Heart right ventricle (tissue), 16 donors: ENCODE measurements at regions of chr5 and their contacts with region 1.

Region 1: GRCh38 chr5:172688349-172689217 is 47.5 kb downstream of the NEURL1B start:
- DNase-seq: peak in 1 of 2 donors; percentile 53
- ATAC-seq: peak; percentile 30 to 58 (median 46)
- H3K4me3 ChIP-seq: no peak overlapping the region
- H3K27ac ChIP-seq: peak overlapping the region; percentile 8 to 92 (median 59)
- H3K4me1 ChIP-seq: peaks cover 23 to 89% (median 74%) of the 10 kb centered on the region in 9 donors
- H3K27me3 ChIP-seq: no peaks in the 10 kb centered on the region
- CTCF ChIP-seq: no peak

Region 2: GRCh38 chr5:172559004-172559932 is 129.3 kb before region 1 on chr5:
- intact Hi-C with region 1: loop called in 1 of 10 experiments (anchors 10 kb)
- DNase-seq: peak; percentile 73 to 80
- ATAC-seq: peak; percentile 27 to 75 (median 58)
- H3K4me3 ChIP-seq: peak overlapping the region in 7 of 10 donors; percentile 2 to 43 (median 24)
- H3K27ac ChIP-seq: peak overlapping the region; percentile 13 to 88 (median 80)
- H3K4me1 ChIP-seq: peaks cover 22 to 52% (median 40%) of the 10 kb centered on the region in 9 donors
- H3K27me3 ChIP-seq: no peaks in the 10 kb centered on the region
- CTCF ChIP-seq: no peak

Region 3: GRCh38 chr5:172616730-172617129 is 71.9 kb before region 1 on chr5:
- intact Hi-C with region 1: no loop called
- DNase-seq: peak; percentile 82
- ATAC-seq: peak; percentile 91 to 97 (median 94)
- H3K4me3 ChIP-seq: peak overlapping the region in 1 of 10 donors; percentile 5
- H3K27ac ChIP-seq: peak overlapping the region; percentile 56 to 87 (median 80)
- H3K4me1 ChIP-seq: peaks cover 0 to 18% (median 0%) of the 10 kb centered on the region in 9 donors
- H3K27me3 ChIP-seq: no peaks in the 10 kb centered on the region
- CTCF ChIP-seq: no peak

Region 4: DNA sequence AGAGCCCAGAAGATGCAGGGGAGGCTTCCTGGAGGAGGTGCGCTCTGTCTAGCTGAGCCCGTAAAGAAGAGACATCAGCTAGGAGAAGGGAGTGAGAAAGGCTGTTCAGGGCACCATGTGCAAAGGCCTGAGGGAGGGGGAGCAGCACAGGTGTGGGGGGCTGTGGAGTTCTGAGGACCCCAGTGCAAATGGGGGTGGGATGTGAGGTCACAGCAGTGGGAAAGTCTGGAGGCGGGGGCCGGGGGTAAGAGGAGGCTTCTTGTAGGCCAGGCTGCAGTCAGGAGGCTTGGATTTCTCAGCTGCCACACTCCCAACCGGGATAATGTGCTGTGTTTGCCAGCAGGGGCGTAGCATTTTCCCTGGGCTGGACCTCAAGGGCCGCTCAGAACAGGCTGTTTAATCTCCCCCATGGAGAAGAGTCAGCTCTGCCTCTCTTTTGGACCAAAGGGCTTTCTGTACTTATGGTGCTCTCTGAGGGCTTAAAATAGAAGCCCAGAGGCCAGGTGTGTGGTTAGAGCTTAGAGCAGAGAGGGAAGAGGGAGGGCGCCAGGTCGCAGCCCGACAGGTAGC is 41.8 kb before region 1 on chr5:
- intact Hi-C with region 1: loop called in 6 of 10 experiments (anchors 2 to 10 kb)
- DNase-seq: peak in 1 of 2 donors; percentile 66
- ATAC-seq: peak; percentile 36 to 67 (median 60)
- H3K4me3 ChIP-seq: peak overlapping the region in 9 of 10 donors; percentile 16 to 99 (median 85)
- H3K27ac ChIP-seq: peak overlapping the region; percentile 23 to 99 (median 96)
- H3K4me1 ChIP-seq: peaks cover 9 to 98% (median 79%) of the 10 kb centered on the region in 9 donors
- H3K27me3 ChIP-seq: peaks cover 0 to 18% (median 0%) of the 10 kb centered on the region in 7 donors
- CTCF ChIP-seq: peak; percentile 21 to 59 (median 48)

Region 5: GRCh38 chr5:173391031-173391430 is 702.4 kb after region 1 on chr5:
- intact Hi-C with region 1: no loop called
- DNase-seq: no peak
- ATAC-seq: no peak
- H3K4me3 ChIP-seq: no peak overlapping the region
- H3K27ac ChIP-seq: no peak overlapping the region
- H3K4me1 ChIP-seq: peaks cover 0 to 7% (median 0%) of the 10 kb centered on the region in 9 donors
- H3K27me3 ChIP-seq: peaks cover 0 to 3% (median 0%) of the 10 kb centered on the region in 7 donors
- CTCF ChIP-seq: no peak